Dendritic cell treated with granulocyte-macrophage colony-stimulating factor and Interleukin-4, amounts not matched to agents 40 ng/mL and 50 ng/mL, for 4 days (primary cell): ENCODE measurements at regions of chr15 and their contacts with region 1.

Region 1: GRCh38 chr15:78909791-78910228 is 35.0 kb downstream of the CTSH start:
- H3K4me3 Mint-ChIP-seq: no peak overlapping the region
- H3K27ac Mint-ChIP-seq: peak overlapping the region; percentile 16
- H3K4me1 Mint-ChIP-seq: peaks cover 73% of the 10 kb centered on the region
- H3K27me3 Mint-ChIP-seq: no peaks in the 10 kb centered on the region

Region 2: DNA sequence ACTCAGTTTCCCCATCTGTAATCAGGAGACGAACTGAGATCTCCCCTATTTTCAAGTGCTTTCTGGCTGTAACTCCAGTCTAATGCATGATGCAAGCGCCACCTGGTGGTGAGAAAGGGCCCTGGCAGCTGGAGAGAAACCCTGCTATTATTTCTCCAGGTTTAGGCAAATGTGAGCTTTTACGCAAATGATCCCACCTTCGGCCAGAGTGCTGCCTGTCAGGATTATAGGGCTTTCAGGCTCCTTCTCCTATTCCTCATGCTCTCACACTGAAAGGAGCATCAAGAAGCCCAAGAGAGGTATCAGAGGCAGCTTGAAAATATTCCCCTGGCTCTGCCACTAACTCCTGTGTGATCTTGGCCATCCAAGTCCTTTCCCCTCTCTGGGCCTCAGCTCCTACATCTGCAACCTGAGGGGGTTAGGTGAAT is 274.7 kb after region 1 on chr15:
- intact Hi-C with region 1: loop called (anchors 5 kb)
- H3K4me3 Mint-ChIP-seq: no peak overlapping the region
- H3K27ac Mint-ChIP-seq: no peak overlapping the region
- H3K4me1 Mint-ChIP-seq: peaks cover 6% of the 10 kb centered on the region
- H3K27me3 Mint-ChIP-seq: peaks cover 10% of the 10 kb centered on the region